HCT116 (cell line): ENCODE measurements at regions of chr5 and their contacts with region 1.

Region 1: DNA sequence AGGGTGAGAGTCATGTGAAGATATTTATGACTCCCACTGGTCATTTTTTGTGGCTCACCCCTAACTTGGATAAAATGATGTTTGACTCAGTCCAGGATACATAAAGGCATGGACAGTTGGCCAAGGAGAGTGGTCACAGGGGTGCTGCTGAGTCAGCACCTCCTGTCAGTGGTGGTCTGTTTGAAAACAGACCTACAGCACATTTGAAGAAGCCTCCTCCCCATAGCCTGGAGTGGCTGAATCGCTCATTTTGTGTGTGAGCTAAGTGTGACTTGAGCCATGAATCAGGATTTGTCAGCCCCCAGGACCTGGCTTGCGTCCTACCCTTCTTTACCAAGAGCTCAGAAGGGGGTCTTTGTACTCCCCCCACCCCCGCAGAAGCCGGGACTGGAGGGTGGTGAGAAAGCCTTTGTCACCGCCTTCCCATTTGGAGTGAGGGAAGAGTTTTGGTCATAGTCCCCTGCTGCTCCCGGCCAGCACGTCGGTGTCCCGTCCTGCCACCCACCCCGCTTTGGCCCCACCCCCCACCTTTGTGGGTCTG is 35.6 kb downstream of the TRIO start:
- DNase-seq: no peak
- ATAC-seq: peak; percentile 59
- H3K4me3 ChIP-seq: peak overlapping the region in 1 of 2 experiments; percentile 38; a peak in 3 of 4 replicates
- H3K27ac ChIP-seq: no peak overlapping the region
- H3K4me1 ChIP-seq: peaks cover 51 to 83% of the 10 kb centered on the region in 2 experiments
- H3K27me3 ChIP-seq: no peaks in the 10 kb centered on the region
- CTCF ChIP-seq: no peak
- POLR2A ChIP-seq: no peak
- RAD21 ChIP-seq: no peak

Region 2: GRCh38 chr5:13814302-13814701 is 364.4 kb before region 1 on chr5:
- CTCF ChIA-PET with region 1: no interaction called
- POLR2A ChIA-PET with region 1: no interaction called
- RAD21 ChIA-PET with region 1: no interaction called
- intact Hi-C with region 1: no loop called
- DNase-seq: no peak
- ATAC-seq: no peak
- H3K4me3 ChIP-seq: no peak overlapping the region
- H3K27ac ChIP-seq: no peak overlapping the region
- H3K4me1 ChIP-seq: no peaks in the 10 kb centered on the region
- H3K27me3 ChIP-seq: 0 out of 2 replicates have a peak, but pooled peaks cover 4% of the 10 kb centered on the region
- CTCF ChIP-seq: no peak
- POLR2A ChIP-seq: no peak
- RAD21 ChIP-seq: no peak

Region 3: DNA sequence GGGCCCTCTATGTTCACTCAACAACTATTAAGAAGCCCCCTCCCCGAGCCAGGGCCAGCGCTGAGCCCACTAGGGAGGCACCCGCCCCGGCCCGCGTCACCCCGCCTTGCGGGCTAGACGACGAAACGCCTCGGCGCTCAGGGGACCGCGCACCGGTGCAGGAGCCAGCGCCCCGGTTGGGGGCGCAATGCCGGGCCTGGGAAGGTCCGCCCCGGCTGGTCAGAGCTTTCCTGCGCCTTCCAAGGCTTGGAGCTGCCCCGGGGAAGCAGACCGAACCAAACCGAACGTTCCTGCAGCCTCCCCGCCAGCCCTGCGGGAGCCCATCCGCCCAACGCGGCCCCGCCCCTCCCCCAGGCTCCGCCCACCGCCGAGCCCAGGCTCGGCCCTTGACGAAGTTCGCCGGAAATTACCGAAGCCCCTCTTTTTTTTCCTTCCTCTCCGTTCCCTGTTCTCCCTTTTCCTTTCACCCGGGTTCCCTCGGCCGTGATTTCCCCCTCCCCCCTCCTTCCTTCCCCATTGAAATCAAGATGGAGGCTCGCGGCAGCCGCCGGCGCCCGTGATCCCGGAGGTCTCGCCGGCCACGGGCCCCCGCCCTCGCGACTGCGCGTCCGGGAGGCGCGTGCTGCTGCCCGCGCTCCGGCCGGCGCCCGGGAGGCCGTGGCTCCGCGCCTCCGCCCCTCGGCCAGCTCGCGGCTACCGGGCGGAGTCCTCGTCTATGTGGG is 35.8 kb before region 1 on chr5 and contains the start of gene TRIO:
- CTCF ChIA-PET with region 1: no interaction called
- POLR2A ChIA-PET with region 1: no interaction called
- RAD21 ChIA-PET with region 1: no interaction called
- intact Hi-C with region 1: loop called (anchors 5 kb)
- DNase-seq: peak; percentile 77
- ATAC-seq: peak; percentile 78
- H3K4me3 ChIP-seq: peak within 1 kb of the TSS; percentile 72 to 97
- H3K27ac ChIP-seq: peak within 1 kb of the TSS; percentile 94
- H3K4me1 ChIP-seq: peaks cover 12 to 33% of the 10 kb centered on the region in 2 experiments
- H3K27me3 ChIP-seq: no peaks in the 10 kb centered on the region; the same call in 1 of the 2 replicates
- CTCF ChIP-seq: peak in 2 of 3 experiments; percentile 48 to 55; a peak in 4 of 6 replicates
- POLR2A ChIP-seq: peak; percentile 74
- RAD21 ChIP-seq: peak; percentile 31; the same call in 1 of the 2 replicates
- total RNA-seq, gene TRIO: 68.4 TPM

Region 4: DNA sequence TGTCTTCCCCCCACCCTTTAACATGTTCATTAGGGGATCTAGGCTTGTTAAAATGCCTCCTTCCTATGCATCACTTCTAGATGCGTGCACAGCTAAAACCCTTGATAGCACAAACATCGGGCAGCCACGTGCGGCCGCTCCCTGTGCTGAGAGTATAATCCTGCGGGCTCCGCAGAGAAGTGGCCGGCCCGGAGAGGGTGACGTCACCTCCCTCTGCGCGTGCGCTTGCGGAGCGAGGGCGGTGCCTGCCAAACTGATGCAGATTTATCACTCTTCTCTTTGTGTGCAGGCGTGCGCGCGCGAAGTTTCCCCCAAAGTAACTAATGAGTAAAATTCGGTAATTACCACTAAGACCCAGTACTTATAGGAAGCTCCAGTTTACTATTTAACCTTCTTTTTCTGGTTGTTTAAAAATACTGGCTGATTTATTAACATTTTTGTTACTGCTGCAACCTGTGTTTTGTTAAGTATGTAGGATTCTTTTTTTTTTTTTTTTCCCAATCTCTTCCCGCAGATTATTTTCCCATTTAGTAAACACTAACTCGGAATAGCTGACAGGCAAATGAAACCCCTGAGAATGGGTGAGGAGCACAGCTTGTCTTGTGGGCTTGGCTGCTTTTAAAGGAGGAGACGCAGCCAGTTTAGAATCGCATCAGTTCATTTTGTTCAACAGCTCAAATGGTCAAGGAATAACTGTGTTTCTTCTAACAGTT is 86.0 kb after region 1 on chr5:
- CTCF ChIA-PET with region 1: no interaction called
- POLR2A ChIA-PET with region 1: no interaction called
- RAD21 ChIA-PET with region 1: no interaction called
- intact Hi-C with region 1: loop called (anchors 5 kb)
- DNase-seq: peak; percentile 71
- ATAC-seq: peak; percentile 74
- H3K4me3 ChIP-seq: peak overlapping the region; percentile 15 to 44; a peak in 3 of 4 replicates
- H3K27ac ChIP-seq: peak overlapping the region; percentile 34; the same call in 1 of the 2 replicates
- H3K4me1 ChIP-seq: peaks cover 51 to 80% of the 10 kb centered on the region in 2 experiments
- H3K27me3 ChIP-seq: no peaks in the 10 kb centered on the region
- CTCF ChIP-seq: no peak
- POLR2A ChIP-seq: peak; percentile 80
- RAD21 ChIP-seq: no peak